ENCODE measurements at regions of chr5 and their contacts with region 1.

Region 1: GRCh38 chr5:34709861-34710673 is 53.9 kb downstream of the RAI14 start:
- DNase-seq: peak; percentile 64
- ATAC-seq: peak; percentile 63
- H3K4me3 ChIP-seq: no peak overlapping the region
- H3K27ac ChIP-seq: peak overlapping the region; percentile 14
- H3K4me1 ChIP-seq: peaks cover 19% of the 10 kb centered on the region
- H3K27me3 ChIP-seq: no peaks in the 10 kb centered on the region
- CTCF ChIP-seq: no peak
- EP300 ChIP-seq: no peak
- POLR2A ChIP-seq: no peak
- RAD21 ChIP-seq: no peak

Region 2: DNA sequence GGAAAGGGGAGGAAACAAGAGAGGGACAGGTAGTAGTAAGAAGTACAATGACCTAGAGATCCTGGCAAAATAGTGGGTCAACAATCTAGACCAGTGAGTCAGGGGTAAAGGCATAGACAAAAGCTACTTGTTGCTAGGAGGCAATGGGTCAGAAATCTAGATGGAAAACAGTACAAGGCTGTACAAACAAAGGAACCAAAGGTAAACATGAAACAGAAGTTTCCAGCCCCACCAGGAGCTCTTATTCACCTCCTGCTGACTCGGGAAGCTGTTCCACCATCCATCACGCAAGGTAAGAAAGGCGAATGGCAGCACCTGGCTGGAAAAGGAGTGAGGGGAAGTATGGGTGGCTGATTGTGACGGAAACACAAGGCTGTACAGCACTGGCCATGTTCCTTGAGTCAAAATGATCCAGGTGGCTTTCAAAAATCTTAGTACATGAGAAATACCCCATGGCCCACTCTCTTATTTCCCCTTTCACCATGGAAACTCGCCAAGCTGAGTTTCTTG is 124.4 kb before region 1 on chr5:
- CTCF ChIA-PET with region 1: no interaction called
- POLR2A ChIA-PET with region 1: no interaction called
- in situ Hi-C with region 1: no loop called
- intact Hi-C with region 1: no loop called
- DNase-seq: peak; percentile 89
- ATAC-seq: peak; percentile 88
- H3K4me3 ChIP-seq: peak overlapping the region in 1 of 3 experiments; percentile 37; a peak in 2 of 6 replicates
- H3K27ac ChIP-seq: peak overlapping the region; percentile 66
- H3K4me1 ChIP-seq: peaks cover 61% of the 10 kb centered on the region
- H3K27me3 ChIP-seq: no peaks in the 10 kb centered on the region
- CTCF ChIP-seq: no peak
- EP300 ChIP-seq: peak in 1 of 2 experiments; percentile 74; a peak in 1 of 4 replicates
- POLR2A ChIP-seq: no peak
- RAD21 ChIP-seq: no peak

Region 3: GRCh38 chr5:34691326-34691725 is 18.7 kb before region 1 on chr5:
- CTCF ChIA-PET with region 1: no interaction called
- POLR2A ChIA-PET with region 1: no interaction called
- in situ Hi-C with region 1: no loop called
- intact Hi-C with region 1: loop called (anchors 1 kb)
- DNase-seq: no peak
- ATAC-seq: no peak
- H3K4me3 ChIP-seq: no peak overlapping the region
- H3K27ac ChIP-seq: no peak overlapping the region
- H3K4me1 ChIP-seq: peaks cover 24% of the 10 kb centered on the region
- H3K27me3 ChIP-seq: no peaks in the 10 kb centered on the region
- CTCF ChIP-seq: no peak
- EP300 ChIP-seq: no peak
- POLR2A ChIP-seq: no peak
- RAD21 ChIP-seq: no peak

Region 4: DNA sequence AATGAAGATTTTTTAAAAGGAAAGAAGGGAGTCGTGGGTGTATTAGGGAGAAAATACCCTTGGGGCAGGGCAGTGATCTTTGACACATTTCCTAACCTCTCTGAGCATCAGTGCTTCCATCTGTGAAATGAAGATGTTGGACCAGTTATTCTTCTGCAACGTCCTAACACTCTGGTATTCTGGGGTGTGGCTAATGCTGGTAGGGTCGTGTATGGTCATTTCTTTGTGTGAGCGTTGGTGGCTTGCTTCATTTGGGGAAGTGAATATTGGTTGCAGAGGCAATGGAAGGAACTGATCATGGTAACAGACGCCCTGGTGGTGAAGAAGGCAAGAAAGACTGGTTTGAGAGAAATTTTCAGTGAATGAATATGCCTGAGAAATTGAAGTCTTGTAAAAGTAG is 61.0 kb after region 1 on chr5:
- CTCF ChIA-PET with region 1: no interaction called
- POLR2A ChIA-PET with region 1: no interaction called
- in situ Hi-C with region 1: no loop called
- intact Hi-C with region 1: no loop called
- DNase-seq: no peak
- ATAC-seq: no peak
- H3K4me3 ChIP-seq: no peak overlapping the region
- H3K27ac ChIP-seq: no peak overlapping the region
- H3K4me1 ChIP-seq: peaks cover 5% of the 10 kb centered on the region; the same call in 1 of the 2 replicates
- H3K27me3 ChIP-seq: no peaks in the 10 kb centered on the region
- CTCF ChIP-seq: no peak
- EP300 ChIP-seq: no peak
- POLR2A ChIP-seq: no peak
- RAD21 ChIP-seq: no peak

Measured in HepG2 (cell line).